Sigmoid colon (tissue), 7 donors: ENCODE measurements at regions of chr12 and their contacts with region 1.

Region 1: GRCh38 chr12:89352492-89353187 is at the start of gene DUSP6:
- DNase-seq: peak; percentile 97
- H3K4me3 ChIP-seq: peak within 1 kb of the TSS; percentile 66 to 91 (median 87)
- H3K27ac ChIP-seq: peak within 1 kb of the TSS; percentile 94 to 100 (median 95)
- H3K4me1 ChIP-seq: peaks cover 0 to 31% (median 10%) of the 10 kb centered on the region in 4 donors
- H3K27me3 ChIP-seq: no peaks in the 10 kb centered on the region
- CTCF ChIP-seq: no peak
- EP300 ChIP-seq: peak in 1 of 4 donors; percentile 25
- POLR2A ChIP-seq: peak in 1 of 2 donors; percentile 52
- total RNA-seq, gene DUSP6: 31.0 to 36.4 (median 33.0) TPM

Region 2: DNA sequence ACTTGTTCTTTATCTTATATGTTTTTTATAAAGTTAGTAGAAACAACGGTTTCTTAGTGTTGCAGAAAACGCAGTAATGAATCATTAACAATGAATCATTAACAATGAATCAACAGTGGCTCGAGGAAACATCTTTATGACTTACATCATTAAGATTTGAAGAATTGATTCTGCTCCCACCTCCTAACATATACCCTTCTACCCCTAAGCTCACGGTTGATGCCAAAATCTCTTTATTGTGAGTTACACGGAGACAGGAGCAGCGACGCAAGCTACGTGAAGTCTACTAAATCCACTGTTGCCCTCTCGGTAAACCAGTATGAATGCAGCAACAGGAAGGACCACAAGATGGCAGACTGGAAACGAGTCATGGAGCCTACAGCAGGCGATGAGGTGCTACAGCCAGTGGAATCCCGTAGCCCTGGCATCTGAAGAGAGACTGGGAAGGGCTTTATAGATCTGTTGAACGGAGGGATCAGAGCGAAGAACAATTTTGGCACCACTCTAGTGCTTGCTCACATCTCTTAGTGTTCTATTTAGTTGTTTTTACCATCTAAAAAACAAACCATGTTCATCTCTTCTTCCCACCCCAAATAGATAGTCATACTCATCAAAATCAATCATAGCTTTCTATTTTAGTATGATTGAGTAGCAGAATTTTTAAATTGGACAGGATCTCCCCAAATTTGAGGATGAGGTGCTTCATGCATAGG is 333.1 kb before region 1 on chr12:
- intact Hi-C with region 1: loop called (anchors 5 kb)
- DNase-seq: peak; percentile 88
- H3K4me3 ChIP-seq: peak overlapping the region in 2 of 4 donors; percentile 30 to 31
- H3K27ac ChIP-seq: no peak overlapping the region
- H3K4me1 ChIP-seq: peaks cover 0 to 7% (median 0%) of the 10 kb centered on the region in 4 donors
- H3K27me3 ChIP-seq: no peaks in the 10 kb centered on the region
- CTCF ChIP-seq: peak; percentile 78 to 82 (median 80)
- EP300 ChIP-seq: no peak
- POLR2A ChIP-seq: no peak

Region 3: GRCh38 chr12:89162704-89163261 is 189.9 kb before region 1 on chr12:
- intact Hi-C with region 1: loop called (anchors 5 kb)
- DNase-seq: peak; percentile 90
- H3K4me3 ChIP-seq: no peak overlapping the region
- H3K27ac ChIP-seq: peak overlapping the region; percentile 50 to 81 (median 64)
- H3K4me1 ChIP-seq: peaks cover 0 to 45% (median 27%) of the 10 kb centered on the region in 4 donors
- H3K27me3 ChIP-seq: no peaks in the 10 kb centered on the region
- CTCF ChIP-seq: no peak
- EP300 ChIP-seq: peak in 2 of 4 donors; percentile 2 to 44
- POLR2A ChIP-seq: no peak

Region 4: DNA sequence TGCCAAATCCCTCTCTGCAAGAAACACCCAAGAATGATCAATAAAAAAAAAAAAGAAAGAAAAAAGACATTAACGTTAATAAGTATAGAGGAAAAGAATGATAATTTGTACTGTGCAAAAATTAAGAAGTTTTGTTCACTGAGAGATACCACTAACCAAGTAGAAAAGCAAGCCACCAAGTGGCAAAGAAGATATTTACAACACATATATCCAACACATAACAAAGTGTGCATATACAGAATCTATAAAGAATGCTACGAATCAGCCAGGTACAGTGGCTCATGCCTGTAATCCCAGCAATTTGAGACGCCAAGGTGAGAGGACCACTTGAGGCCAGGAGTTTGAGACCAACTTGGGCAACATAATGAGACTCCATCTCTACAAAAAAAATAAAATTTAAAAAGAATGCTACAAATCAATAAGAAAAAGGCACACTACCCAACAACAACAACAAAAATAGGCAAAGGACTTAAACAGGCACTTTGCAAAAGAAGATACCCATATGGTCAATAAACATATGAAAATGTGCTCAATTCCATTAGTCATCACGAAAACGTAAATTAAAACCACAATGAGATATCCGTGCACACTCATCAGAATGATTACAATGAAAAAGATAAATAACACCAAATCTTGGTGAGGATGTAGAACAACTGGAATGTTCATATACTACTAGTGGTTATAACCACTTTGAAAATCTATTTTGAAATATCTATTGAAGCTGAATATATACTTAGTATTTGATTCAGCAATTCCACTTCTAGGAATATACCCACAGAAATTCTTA is 152.1 kb after region 1 on chr12:
- intact Hi-C with region 1: no loop called
- DNase-seq: no peak
- H3K4me3 ChIP-seq: no peak overlapping the region
- H3K27ac ChIP-seq: no peak overlapping the region
- H3K4me1 ChIP-seq: no peaks in the 10 kb centered on the region
- H3K27me3 ChIP-seq: no peaks in the 10 kb centered on the region
- CTCF ChIP-seq: no peak
- EP300 ChIP-seq: no peak
- POLR2A ChIP-seq: no peak

Region 5: GRCh38 chr12:89524541-89525285 is 172.1 kb after region 1 on chr12 and contains the start of gene GALNT4:
- intact Hi-C with region 1: loop called (anchors 5 kb)
- DNase-seq: peak; percentile 93
- H3K4me3 ChIP-seq: peak within 1 kb of the TSS; percentile 74 to 95 (median 94)
- H3K27ac ChIP-seq: peak within 1 kb of the TSS; percentile 87 to 92 (median 90)
- H3K4me1 ChIP-seq: peaks cover 0 to 56% (median 35%) of the 10 kb centered on the region in 4 donors
- H3K27me3 ChIP-seq: no peaks in the 10 kb centered on the region
- CTCF ChIP-seq: peak; percentile 58 to 87 (median 80)
- EP300 ChIP-seq: no peak
- POLR2A ChIP-seq: peak; percentile 40 to 63
- total RNA-seq, gene GALNT4: 3.4 to 4.8 (median 4.3) TPM